Ovary (tissue), 10 donors: ENCODE measurements at regions of chr15 and their contacts with region 1.

Region 1: GRCh38 chr15:81789403-81789802 is 256.4 kb downstream of the MEX3B start:
- DNase-seq: no peak
- H3K4me3 ChIP-seq: no peak overlapping the region
- H3K27ac ChIP-seq: no peak overlapping the region
- H3K4me1 ChIP-seq: no peaks in the 10 kb centered on the region
- H3K27me3 ChIP-seq: no peaks in the 10 kb centered on the region
- CTCF ChIP-seq: no peak
- EP300 ChIP-seq: no peak
- POLR2A ChIP-seq: no peak

Region 2: DNA sequence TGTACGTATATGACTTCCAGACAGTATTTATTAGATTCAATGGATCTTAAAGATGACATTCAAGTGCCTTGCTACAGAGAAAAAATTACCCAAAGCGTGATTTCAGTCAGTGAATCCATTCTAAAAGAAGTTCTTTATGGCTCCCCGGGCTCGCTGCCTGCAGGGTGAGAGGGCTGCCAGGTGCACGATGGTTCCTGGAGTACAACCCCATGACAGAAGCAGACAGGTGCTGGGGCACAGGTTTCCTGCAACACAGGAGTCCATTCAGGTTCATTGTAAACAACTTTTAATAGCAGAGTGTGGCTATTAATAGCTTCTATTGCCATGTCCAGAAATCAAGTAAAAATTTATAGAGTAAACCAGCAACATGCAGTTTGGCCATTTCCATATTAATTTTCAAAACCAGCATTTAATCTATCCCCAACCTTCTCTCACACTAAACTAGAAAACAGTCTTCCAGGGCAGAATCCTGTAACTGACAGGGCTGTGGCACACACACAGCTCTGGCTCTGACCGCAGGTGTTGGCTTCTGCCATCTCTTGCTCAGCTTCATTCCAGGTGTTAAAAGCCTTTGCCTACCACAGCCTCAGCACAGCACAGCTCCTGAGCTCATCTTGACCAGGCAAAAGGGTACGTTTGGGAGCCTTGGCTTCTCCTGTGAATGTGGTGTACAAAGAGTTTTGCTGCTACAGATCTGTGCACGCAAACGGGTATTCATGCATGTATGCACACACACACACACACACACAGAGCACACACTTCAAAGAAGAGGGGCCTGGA is 70.5 kb after region 1 on chr15:
- intact Hi-C with region 1: loop called in 1 of 4 experiments (anchors 10 kb)
- DNase-seq: no peak
- H3K4me3 ChIP-seq: no peak overlapping the region
- H3K27ac ChIP-seq: no peak overlapping the region
- H3K4me1 ChIP-seq: no peaks in the 10 kb centered on the region
- H3K27me3 ChIP-seq: no peaks in the 10 kb centered on the region
- CTCF ChIP-seq: no peak
- EP300 ChIP-seq: no peak
- POLR2A ChIP-seq: no peak